ENCODE measurements at regions of chr6 and their contacts with region 1.

Region 1: DNA sequence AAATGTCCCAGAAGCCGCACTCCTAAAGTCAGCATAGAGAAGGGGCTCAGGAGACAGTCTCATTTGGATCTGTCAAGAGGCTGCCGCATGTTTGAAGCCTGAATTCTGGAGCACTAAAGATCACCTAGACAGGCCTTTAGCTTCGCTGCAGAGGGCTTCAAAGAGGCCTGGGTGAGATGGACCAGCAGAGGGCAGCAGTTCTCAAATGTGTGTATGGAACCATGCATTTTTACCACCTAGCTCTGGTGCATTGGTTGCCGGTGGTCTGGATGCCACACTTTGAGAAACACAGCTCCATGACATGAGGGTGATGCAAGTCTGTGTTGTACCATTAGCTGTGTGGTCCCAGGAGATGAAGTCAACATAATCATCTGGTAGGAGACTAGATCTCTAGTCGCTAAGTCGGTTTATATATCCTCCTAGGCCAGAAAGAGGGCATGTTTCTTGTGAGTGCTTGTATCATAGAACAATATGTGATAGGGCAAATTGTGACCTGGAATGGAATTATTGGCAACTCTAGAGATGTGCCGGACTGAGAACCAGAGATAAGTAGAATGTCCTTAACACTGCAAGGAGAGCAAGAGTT is 64.8 kb downstream of the KIAA0319 start:
- DNase-seq: peak; percentile 21
- H3K4me3 ChIP-seq: no peak overlapping the region
- H3K27ac ChIP-seq: no peak overlapping the region
- H3K27me3 ChIP-seq: peaks cover 6% of the 10 kb centered on the region
- CTCF ChIP-seq: peak; percentile 94

Region 2: DNA sequence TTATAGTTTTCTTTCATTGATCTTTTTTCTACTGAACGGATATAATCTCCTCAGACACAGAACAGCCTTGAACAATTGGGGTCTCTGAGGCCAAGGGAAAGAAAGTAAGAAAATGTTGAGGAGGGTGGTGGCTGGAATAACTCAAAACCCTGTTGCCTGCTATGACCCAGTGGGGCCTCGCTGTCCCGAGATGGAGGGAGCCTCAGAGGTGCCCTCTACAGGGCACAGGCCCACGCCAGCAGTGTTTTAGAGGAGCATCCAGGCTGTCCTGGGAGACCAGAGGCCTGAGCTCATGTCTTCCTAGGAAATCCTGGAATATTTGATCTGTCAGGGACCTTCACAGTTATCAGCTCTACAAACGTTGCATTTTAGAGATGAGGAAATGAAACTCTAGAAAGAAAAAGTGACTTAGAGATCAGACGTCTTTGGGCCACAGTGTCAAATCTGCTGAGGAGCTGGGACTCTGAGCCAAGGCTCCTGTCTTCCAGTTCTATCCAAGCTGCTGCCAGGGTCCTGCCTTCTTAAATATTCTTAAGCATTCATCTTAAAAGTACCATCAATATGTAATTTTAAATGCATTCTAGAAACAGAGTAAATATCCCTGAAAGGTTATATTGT is 60.1 kb before region 1 on chr6:
- CTCF ChIA-PET with region 1: interaction called, 10 read pairs
- POLR2A ChIA-PET with region 1: no interaction called
- DNase-seq: no peak
- H3K4me3 ChIP-seq: no peak overlapping the region
- H3K27ac ChIP-seq: no peak overlapping the region
- H3K27me3 ChIP-seq: no peaks in the 10 kb centered on the region
- CTCF ChIP-seq: peak; percentile 72

Region 3: DNA sequence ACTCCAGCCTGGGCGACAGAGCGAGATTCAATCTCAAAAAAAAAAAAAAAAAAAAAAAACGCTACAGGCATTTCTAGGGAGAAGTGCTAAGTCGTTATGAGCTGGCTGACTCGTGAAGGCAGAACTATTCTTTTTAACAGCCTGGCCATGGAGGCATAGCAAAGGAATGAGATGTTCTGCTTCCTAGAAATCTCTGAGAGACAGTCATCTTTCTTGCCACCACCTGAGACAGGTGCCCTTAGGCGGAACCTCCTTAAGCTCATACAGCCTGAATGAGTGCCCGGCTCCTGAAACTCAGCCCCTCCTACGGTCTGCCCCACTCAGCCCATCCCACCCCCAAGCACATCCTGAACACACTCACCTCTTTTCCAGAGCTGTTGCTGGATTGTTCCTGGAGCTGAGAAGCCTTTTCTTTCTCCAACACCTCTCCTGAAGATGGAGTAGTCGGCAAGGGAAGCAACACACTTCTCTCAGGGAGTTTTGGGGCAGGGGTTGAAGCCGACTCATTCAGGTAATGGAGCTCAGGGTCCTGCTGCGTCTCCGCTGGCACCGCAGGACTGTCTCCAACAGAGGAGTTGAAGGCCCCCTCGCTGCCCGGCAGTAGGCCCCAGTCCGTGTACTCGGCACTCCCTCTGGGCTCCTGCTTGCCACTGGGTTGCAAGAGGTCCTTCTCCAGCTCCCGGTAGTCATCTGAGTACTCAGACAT is 14.5 kb after region 1 on chr6:
- CTCF ChIA-PET with region 1: interaction called, 14 read pairs
- POLR2A ChIA-PET with region 1: interaction called, 5 read pairs
- DNase-seq: no peak
- H3K4me3 ChIP-seq: no peak overlapping the region
- H3K27ac ChIP-seq: no peak overlapping the region
- H3K27me3 ChIP-seq: peaks cover 2% of the 10 kb centered on the region
- CTCF ChIP-seq: no peak

Region 4: GRCh38 chr6:24614648-24615047 is 33.5 kb after region 1 on chr6:
- CTCF ChIA-PET with region 1: interaction called, 11 read pairs
- POLR2A ChIA-PET with region 1: no interaction called
- DNase-seq: no peak
- H3K4me3 ChIP-seq: no peak overlapping the region
- H3K27ac ChIP-seq: no peak overlapping the region
- H3K27me3 ChIP-seq: no peaks in the 10 kb centered on the region
- CTCF ChIP-seq: no peak

Region 5: DNA sequence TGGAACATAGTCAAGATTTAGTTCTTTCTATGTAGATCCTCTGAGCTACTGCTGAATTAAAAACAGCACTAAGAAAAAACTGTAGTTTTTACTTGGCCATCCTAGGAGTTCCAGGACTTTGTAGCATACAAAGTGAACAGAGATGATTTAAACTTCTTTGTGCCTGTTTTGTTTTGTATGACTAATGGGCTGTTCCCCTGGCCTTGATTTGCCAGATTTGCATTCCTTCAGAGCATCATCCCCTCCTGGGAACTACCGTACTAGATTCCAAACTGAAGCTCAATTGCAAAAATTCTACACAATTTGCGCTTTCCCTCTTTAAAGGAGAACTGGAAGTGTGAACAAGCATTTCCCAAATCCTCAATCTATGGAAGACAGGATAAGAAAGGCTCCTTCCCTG is 108.8 kb after region 1 on chr6:
- CTCF ChIA-PET with region 1: interaction called, 127 read pairs
- POLR2A ChIA-PET with region 1: no interaction called
- DNase-seq: no peak
- H3K4me3 ChIP-seq: no peak overlapping the region
- H3K27ac ChIP-seq: no peak overlapping the region
- H3K27me3 ChIP-seq: no peaks in the 10 kb centered on the region
- CTCF ChIP-seq: no peak

Region 6: GRCh38 chr6:24699521-24700359 is 118.6 kb after region 1 on chr6:
- CTCF ChIA-PET with region 1: interaction called, 127 read pairs
- POLR2A ChIA-PET with region 1: no interaction called
- DNase-seq: no peak
- H3K4me3 ChIP-seq: no peak overlapping the region
- H3K27ac ChIP-seq: no peak overlapping the region
- H3K27me3 ChIP-seq: no peaks in the 10 kb centered on the region
- CTCF ChIP-seq: no peak

Region 7: GRCh38 chr6:24766680-24767462 is 185.7 kb after region 1 on chr6:
- CTCF ChIA-PET with region 1: interaction called, 42 read pairs
- POLR2A ChIA-PET with region 1: no interaction called
- DNase-seq: no peak
- H3K4me3 ChIP-seq: no peak overlapping the region
- H3K27ac ChIP-seq: no peak overlapping the region
- H3K27me3 ChIP-seq: no peaks in the 10 kb centered on the region
- CTCF ChIP-seq: peak; percentile 51